Uterus (tissue), 4 donors: ENCODE measurements at regions of chr19 and their contacts with region 1.

Region 1: DNA sequence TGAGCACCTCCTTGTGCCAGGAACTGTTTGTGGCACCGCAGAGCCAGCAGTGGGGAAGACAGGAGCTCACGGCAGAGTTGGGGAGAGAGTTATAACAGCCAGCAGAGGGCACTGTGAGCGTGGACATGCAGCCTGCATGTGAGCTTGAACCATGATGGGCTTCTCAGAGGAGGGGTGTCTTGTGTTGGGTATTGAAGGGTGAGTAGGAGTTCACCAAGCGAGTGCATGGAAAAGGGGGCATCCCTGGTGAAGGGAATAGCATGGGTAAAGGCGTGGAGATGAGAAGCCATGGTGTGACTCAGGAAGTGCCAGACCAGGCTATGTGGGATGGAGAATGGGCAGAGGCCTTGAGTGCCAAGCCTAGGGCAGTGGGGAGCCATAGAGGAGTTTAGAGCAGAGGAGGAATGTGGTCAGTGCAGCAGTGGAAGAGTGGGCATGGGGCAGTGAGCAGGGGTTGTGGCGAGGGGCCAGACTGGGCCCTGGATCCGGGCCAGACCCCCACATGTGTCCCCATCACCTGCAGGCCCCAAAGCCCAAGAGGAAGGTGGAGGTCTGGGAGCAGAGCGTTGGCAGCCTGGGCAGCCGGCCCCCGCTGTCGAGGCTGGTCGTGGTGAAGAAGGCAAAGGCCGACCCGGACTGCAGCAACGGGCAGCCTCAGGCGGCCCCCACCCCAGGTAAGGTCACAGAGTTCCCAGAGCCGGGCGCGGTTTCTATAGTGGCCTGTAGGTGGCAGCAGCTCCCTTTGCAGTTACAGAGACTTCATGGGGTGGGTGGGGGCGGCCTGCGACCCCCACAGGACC is 11.8 kb upstream of the SHD start:
- DNase-seq: peak; percentile 49 to 51
- H3K4me3 ChIP-seq: no peak overlapping the region
- H3K27ac ChIP-seq: no peak overlapping the region
- H3K4me1 ChIP-seq: no peaks in the 10 kb centered on the region
- H3K27me3 ChIP-seq: no peaks in the 10 kb centered on the region
- CTCF ChIP-seq: peak; percentile 70 to 87 (median 78)
- POLR2A ChIP-seq: no peak

Region 2: GRCh38 chr19:4352701-4353121 is 85.4 kb after region 1 on chr19:
- intact Hi-C with region 1: loop called (anchors 10 kb)
- DNase-seq: peak in 1 of 2 donors; percentile 57
- H3K4me3 ChIP-seq: no peak overlapping the region
- H3K27ac ChIP-seq: no peak overlapping the region
- H3K4me1 ChIP-seq: no peaks in the 10 kb centered on the region
- H3K27me3 ChIP-seq: no peaks in the 10 kb centered on the region
- CTCF ChIP-seq: peak; percentile 38 to 86 (median 58)
- POLR2A ChIP-seq: no peak